Panc1 (cell line): ENCODE measurements at regions of chr3 and their contacts with region 1.

Region 1: DNA sequence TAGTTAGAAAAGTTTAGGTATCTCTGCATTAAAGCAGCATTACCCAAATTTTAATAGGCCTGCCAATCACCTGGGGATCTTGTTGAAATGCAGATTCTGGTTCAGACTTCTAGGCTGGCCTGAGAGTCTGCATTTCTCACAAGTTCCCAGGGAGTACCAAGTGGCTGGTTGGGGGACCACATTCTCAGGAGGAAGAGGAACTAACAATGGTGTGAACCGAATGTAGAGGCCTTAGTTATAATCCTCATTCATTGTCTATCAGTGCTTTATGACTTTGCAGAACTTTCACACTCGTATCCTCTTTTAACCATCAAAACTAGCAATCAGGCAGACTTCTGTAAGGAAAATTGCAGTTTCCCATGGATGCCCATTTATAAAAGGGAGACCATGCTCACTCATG is 38.2 kb upstream of the UBE2E1 start:
- DNase-seq: no peak
- ATAC-seq: no peak
- H3K4me3 ChIP-seq: no peak overlapping the region
- H3K27ac ChIP-seq: no peak overlapping the region
- H3K4me1 ChIP-seq: no peaks in the 10 kb centered on the region
- H3K27me3 ChIP-seq: no peaks in the 10 kb centered on the region
- CTCF ChIP-seq: no peak

Region 2: GRCh38 chr3:23785097-23785645 is 17.6 kb after region 1 on chr3:
- CTCF ChIA-PET with region 1: no interaction called
- POLR2A ChIA-PET with region 1: interaction called, 20 read pairs
- in situ Hi-C with region 1: no loop called
- intact Hi-C with region 1: no loop called
- DNase-seq: no peak
- ATAC-seq: no peak
- H3K4me3 ChIP-seq: no peak overlapping the region
- H3K27ac ChIP-seq: no peak overlapping the region
- H3K4me1 ChIP-seq: no peaks in the 10 kb centered on the region
- H3K27me3 ChIP-seq: no peaks in the 10 kb centered on the region
- CTCF ChIP-seq: no peak